Mammary epithelial cell (primary cell): ENCODE measurements at regions of chr13 and their contacts with region 1.

Region 1: DNA sequence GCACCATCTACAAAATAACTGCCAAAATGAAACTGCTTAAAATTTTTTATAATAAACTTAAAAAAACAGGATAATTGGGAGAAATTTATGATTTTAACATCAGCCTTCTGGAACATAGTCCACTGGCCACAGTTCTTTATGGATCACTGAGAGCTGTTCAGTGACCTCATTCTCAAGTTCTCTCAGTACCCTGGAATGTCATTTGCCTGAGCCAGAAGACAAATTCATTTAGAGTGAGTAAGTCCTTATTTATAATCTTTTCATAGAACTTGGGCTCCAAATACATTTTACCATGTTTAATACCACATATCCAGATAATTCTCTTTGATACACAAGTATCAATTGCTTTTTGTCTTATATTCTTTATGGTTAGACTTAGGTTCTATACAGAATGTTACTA is 87.6 kb downstream of the CAB39L start:
- DNase-seq: peak; percentile 52
- H3K4me3 ChIP-seq: no peak overlapping the region
- H3K27ac ChIP-seq: no peak overlapping the region
- H3K4me1 ChIP-seq: no peaks in the 10 kb centered on the region
- H3K27me3 ChIP-seq: no peaks in the 10 kb centered on the region
- CTCF ChIP-seq: no peak

Region 2: DNA sequence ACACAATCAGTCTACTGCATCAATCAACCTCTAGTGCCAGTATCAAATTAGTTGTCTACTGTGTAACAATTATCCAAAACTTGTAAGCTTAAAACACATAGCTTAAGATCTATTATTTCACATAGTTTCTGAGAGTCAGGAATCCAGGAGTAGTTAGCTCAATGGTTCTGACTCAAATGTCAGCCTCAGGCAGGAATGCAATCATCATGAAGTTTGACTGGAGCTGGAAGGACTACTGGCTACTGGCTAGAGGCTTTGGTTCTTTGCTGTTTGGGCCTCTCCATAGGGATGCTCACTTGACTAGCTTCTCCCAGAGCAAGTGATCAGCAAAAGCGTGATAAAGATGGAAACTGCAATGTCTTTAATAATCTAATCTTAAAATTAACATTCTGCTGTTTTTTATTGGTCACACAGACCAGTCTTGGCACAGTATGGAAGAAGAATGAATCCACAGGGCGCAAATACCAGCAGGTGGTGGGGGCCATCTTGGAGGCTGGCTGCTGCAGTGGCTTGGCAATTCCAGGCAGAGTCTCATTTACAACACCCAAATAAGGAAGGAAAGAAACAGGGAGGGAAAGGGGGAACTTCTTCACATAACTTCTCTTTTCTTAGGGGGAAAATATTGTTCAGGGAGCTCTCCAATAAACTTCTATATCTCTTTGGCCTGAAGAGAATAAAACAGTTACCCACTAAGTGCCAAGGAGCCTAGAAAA is 72.0 kb after region 1 on chr13:
- CTCF ChIA-PET with region 1: no interaction called
- dilution Hi-C with region 1: loop called (anchors 5 kb)
- in situ Hi-C with region 1: no loop called
- intact Hi-C with region 1: no loop called
- DNase-seq: no peak
- H3K4me3 ChIP-seq: no peak overlapping the region
- H3K27ac ChIP-seq: no peak overlapping the region
- H3K4me1 ChIP-seq: no peaks in the 10 kb centered on the region
- H3K27me3 ChIP-seq: no peaks in the 10 kb centered on the region
- CTCF ChIP-seq: no peak